ENCODE measurements at regions of chr18 and their contacts with region 1.

Region 1: DNA sequence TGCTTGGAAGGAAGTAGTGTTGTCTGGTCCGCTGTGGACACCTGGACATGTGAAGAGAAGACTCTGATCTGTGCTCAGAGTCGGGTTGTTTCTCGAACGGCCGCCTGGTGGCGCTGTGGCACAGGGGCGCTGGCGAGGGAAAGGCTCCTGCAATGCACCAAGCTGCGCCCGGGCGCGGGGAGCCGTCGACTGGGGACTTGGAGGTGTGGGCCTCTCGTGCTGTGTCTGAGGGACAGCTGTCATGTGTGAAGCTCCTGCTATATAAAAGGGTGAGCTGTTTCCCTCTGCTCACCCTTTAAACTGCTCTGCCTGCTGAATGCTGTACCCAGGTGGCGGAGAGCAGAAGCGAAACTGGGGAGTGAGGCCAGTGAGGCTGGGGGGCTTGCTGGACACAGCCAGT is 44.0 kb downstream of the GNAL start:
- DNase-seq: no peak
- H3K4me3 ChIP-seq: peak overlapping the region; percentile 44
- CTCF ChIP-seq: peak; percentile 93

Region 2: GRCh38 chr18:11719621-11720020 is 13.4 kb before region 1 on chr18:
- CTCF ChIA-PET with region 1: interaction called, 15 read pairs
- POLR2A ChIA-PET with region 1: no interaction called
- DNase-seq: no peak
- H3K4me3 ChIP-seq: no peak overlapping the region
- CTCF ChIP-seq: no peak

Region 3: DNA sequence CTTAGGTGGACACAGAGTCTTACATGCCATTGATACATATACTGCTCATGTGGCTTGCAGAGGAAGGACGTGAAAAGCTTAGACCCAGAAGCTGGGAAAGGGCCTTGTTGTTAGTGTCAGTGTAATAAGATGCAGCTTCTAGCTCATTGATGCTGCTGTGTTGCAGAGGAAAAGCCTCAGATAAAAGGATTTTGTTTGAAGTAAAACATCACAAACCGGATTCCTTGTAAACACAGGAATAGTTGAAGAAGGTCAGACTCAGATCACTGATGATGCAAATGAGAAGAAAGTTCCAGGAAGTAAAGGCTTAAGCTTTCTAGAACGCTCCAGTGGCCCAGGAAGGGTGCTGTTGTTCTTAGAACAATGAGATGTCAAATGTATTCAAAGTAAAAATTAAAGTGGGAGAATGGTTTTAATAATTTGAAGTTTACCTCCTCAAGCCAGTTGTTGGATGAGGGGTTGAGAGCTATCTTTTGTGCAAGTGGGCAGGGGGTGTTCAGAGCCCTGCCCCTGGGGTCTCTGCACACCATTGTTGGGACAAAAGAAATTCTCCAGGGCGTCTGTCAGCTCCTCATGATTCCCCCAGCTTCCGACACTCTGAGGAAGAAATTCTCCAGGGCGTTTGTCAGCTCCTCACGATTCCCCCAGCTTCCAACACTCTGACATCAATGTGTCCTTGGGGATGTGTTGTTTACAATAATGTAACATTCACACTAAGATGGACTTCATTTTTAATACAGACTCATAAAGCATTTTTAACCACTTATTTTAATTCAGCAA is 56.9 kb after region 1 on chr18:
- CTCF ChIA-PET with region 1: no interaction called
- POLR2A ChIA-PET with region 1: no interaction called
- DNase-seq: no peak
- H3K4me3 ChIP-seq: no peak overlapping the region
- CTCF ChIP-seq: no peak

Region 4: GRCh38 chr18:11818486-11819203 is 85.6 kb after region 1 on chr18:
- CTCF ChIA-PET with region 1: no interaction called
- POLR2A ChIA-PET with region 1: no interaction called
- DNase-seq: no peak
- H3K4me3 ChIP-seq: no peak overlapping the region
- CTCF ChIP-seq: no peak

Region 5: GRCh38 chr18:11849841-11850634 is 117.0 kb after region 1 on chr18:
- CTCF ChIA-PET with region 1: interaction called, 11 read pairs
- POLR2A ChIA-PET with region 1: no interaction called
- DNase-seq: peak; percentile 77
- H3K4me3 ChIP-seq: peak overlapping the region; percentile 96
- CTCF ChIP-seq: no peak